ENCODE measurements at regions of chr22 and their contacts with region 1.

Region 1: DNA sequence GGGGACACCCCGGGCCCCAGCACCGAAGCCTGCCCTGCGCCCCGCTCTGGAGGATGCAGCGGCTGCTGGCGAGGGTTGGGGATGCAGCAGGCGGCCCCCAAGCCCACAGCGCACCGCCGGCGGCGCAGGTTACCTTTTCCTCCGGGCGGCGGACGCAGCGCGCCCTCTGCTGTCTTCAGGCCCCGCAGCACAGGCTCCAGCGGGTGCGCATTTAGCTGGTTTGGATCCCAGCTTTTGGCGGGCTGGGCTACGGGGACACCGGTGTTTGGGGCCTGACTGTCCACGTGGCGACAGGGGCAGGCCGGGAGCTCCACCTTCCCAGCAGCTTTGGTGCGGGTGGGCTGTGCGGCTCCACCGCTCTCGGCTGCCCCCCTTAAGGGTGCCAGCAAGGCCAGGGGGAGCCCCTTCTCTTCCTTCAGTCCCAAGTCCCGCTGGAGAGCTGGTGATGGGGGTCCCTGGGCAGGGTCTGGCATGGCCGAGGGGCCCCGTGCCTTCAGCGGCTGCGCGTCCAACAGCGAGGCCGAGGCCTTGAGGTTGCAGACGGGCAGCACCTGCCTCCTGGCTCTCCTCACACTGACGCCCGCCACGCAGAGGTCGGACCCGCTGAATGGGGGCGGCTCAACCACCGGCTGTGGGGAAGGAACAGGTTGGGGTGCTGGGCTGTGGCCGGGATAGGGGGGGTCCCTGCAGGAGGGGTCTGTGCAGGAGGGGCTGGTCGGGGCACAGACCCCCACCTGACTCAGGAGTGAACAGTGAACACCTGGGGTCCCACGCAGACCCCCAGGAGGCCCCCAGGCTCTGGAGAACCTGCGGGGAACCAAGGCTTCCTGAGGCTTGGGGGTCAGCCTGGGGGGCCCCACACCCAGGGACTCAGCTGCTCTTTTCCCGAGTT is 18.0 kb upstream of the IL17REL start:
- DNase-seq: peak; percentile 55
- H3K4me3 ChIP-seq: no peak overlapping the region
- H3K27ac ChIP-seq: no peak overlapping the region
- H3K4me1 ChIP-seq: no peaks in the 10 kb centered on the region
- H3K27me3 ChIP-seq: no peaks in the 10 kb centered on the region
- CTCF ChIP-seq: peak; percentile 86 to 95
- POLR2A ChIP-seq: no peak

Region 2: GRCh38 chr22:49930739-49931412 is 99.7 kb before region 1 on chr22:
- CTCF ChIA-PET with region 1: interaction called, 174 read pairs
- POLR2A ChIA-PET with region 1: interaction called, 6 read pairs
- dilution Hi-C with region 1: no loop called
- intact Hi-C with region 1: loop called (anchors 1 kb)
- DNase-seq: peak; percentile 96
- H3K4me3 ChIP-seq: no peak overlapping the region
- H3K27ac ChIP-seq: peak overlapping the region; percentile 74
- H3K4me1 ChIP-seq: peaks cover 39% of the 10 kb centered on the region
- H3K27me3 ChIP-seq: no peaks in the 10 kb centered on the region
- CTCF ChIP-seq: peak; percentile 66 to 75
- POLR2A ChIP-seq: peak; percentile 57

Region 3: GRCh38 chr22:49979587-49980264 is 50.8 kb before region 1 on chr22:
- CTCF ChIA-PET with region 1: interaction called, 14 read pairs
- POLR2A ChIA-PET with region 1: no interaction called
- dilution Hi-C with region 1: no loop called
- intact Hi-C with region 1: loop called (anchors 2 kb)
- DNase-seq: peak; percentile 53
- H3K4me3 ChIP-seq: no peak overlapping the region
- H3K27ac ChIP-seq: no peak overlapping the region
- H3K4me1 ChIP-seq: peaks cover 4% of the 10 kb centered on the region
- H3K27me3 ChIP-seq: peaks cover 7 to 8% of the 10 kb centered on the region in 2 experiments
- CTCF ChIP-seq: peak; percentile 68 to 80
- POLR2A ChIP-seq: no peak

Region 4: DNA sequence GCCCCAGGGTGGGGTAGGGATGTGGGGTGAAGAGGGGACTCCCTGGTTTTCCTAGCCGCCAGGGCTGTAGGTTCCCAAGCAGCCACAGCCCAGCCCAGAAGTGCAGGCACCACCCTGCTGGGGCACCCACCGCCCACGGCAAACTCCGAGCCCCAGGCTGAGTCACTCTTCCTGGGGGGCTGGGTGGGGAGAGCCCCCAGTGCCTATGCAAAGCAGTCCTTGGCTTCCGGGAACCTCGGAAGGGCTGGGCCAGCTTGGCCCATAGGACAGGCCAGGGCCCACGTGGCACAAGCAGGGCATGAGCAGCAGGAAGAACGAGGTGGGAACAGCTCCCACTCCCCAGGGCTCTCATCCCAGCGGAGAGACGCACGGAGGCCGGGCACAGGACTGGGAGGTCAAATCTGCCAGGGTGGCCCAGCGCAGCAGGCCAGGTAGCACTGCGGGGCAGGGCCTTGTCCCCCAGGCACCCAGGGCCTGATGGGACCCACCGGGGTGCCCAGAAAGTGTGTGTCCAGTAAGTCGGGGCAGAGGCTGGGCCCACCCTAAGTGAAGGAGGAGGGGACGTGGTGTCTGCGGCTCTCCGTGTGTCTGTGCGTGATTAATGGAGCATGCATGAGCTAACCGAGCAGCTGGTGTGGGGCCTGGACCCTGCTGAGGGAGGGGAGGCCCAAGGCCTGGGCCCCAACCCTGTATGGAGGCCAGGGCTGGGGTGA is 13.4 kb before region 1 on chr22:
- CTCF ChIA-PET with region 1: interaction called, 14 read pairs
- POLR2A ChIA-PET with region 1: no interaction called
- dilution Hi-C with region 1: no loop called
- intact Hi-C with region 1: no loop called
- DNase-seq: no peak
- H3K4me3 ChIP-seq: no peak overlapping the region
- H3K27ac ChIP-seq: no peak overlapping the region
- H3K4me1 ChIP-seq: no peaks in the 10 kb centered on the region
- H3K27me3 ChIP-seq: peaks cover 23 to 32% of the 10 kb centered on the region in 2 experiments
- CTCF ChIP-seq: no peak
- POLR2A ChIP-seq: no peak

Region 5: DNA sequence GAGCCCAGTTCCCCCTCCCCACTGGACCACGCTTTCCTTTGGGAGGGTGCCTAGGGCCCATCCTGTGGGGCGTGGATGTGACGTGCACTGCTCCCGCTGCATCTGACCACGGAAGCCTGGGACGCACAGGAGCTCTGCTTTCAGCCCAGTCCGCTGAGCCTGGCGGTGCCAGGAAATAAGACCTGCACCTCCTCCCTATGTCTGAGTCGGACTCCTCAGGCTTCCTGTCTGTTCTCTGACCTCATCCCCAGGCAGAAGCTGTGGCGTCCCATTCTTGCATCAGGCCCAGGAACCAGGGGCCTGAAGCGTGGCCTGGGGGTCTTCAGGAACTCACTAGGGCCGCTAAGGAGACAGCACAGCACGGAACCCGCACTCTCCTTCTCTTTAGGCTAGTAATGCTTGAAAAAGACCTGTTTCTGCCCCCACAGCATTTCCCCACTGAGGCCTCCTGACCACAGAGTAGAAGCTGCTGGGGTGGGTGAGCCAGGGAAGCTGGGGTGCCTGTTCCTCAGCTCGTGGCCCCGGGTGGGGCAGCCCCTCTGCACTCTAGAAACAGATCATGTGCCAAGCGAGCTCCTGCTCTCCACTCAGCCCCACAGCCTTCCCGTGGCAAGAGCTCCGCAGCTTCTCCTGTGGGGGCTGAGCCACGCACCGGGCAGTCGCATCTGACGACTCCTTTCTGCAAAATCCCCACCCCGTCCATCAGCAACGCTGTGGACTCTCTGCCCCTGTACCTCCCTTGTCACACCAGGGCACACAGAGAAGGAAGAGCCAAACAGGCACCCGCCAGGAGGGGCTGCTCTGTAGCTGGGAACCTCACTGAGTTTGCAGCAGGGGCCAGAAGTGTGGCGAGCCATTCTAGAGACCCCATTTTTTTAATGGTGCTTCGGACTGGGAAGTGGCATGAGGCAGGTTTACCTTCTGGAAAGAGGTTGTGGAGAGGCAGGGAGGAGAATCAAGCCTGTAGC is 81.9 kb after region 1 on chr22:
- CTCF ChIA-PET with region 1: interaction called, 21 read pairs
- POLR2A ChIA-PET with region 1: no interaction called
- dilution Hi-C with region 1: no loop called
- intact Hi-C with region 1: no loop called
- DNase-seq: peak; percentile 90
- H3K4me3 ChIP-seq: no peak overlapping the region
- H3K27ac ChIP-seq: peak overlapping the region; percentile 96
- H3K4me1 ChIP-seq: peaks cover 47% of the 10 kb centered on the region
- H3K27me3 ChIP-seq: no peaks in the 10 kb centered on the region
- CTCF ChIP-seq: no peak
- POLR2A ChIP-seq: peak; percentile 56

Measured in endothelial cell of umbilical vein (primary cell).